HEK293 (cell line): ENCODE measurements at regions of chr17 and their contacts with region 1.

Region 1: DNA sequence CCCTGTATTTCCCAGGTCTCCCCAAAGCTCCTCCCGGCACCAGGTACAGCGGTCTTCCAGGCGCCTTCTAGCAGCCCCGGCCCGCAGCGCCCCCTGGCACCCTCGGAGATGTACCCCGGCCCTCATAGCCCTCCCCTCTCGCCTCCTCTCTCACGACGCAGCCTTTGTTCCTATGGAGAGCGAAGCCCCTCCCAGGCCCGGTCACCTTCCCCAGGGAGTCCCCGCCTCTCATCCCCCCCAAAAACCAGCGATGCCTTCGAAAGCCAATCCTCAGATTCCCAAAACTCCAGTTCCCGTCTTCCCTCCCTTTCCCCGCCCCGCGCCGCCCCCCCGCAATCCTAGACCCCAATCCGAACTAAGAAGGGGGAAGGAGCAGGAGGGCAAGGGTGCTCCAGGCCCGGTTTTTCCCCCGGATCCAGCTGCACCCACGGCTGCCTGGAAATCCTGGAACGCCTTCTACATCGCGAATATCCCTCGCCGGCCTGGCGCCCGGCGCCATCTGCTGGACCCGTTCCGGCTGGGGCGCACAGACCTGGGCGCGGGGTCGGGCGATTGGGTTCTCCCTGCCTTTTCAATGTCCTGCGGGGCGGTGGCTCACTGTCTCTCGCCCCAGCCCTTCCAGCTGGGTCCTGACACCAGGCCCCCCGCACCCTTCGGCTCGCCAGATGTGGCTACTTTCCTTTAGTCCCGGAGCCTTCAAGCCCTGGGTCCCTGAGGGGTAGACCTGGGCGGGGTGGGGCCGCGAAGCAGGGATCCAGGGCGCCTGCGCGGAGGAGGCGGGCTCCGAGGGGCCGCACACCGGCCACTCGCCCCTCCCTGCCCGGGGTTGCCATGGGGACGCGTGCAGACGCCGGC is at the start of gene DNAH2:
- H3K4me3 ChIP-seq: peak within 1 kb of the TSS; percentile 54
- H3K27ac ChIP-seq: peak within 1 kb of the TSS; percentile 38; the same call in 1 of the 2 replicates
- H3K4me1 ChIP-seq: peaks cover 9% of the 10 kb centered on the region
- CTCF ChIP-seq: peak; percentile 96

Region 2: GRCh38 chr17:7703584-7704479 is 13.3 kb before region 1 on chr17:
- CTCF ChIA-PET with region 1: interaction called, 49 read pairs
- POLR2A ChIA-PET with region 1: interaction called, 51 read pairs
- H3K4me3 ChIP-seq: no peak overlapping the region
- H3K27ac ChIP-seq: no peak overlapping the region
- H3K4me1 ChIP-seq: peaks cover 14% of the 10 kb centered on the region; the same call in 1 of the 2 replicates
- CTCF ChIP-seq: no peak